PC-9 (cell line): ENCODE measurements at regions of chr17 and their contacts with region 1.

Region 1: GRCh38 chr17:50904521-50905459 is 38.6 kb upstream of the TOB1 start:
- DNase-seq: peak; percentile 83 to 95
- H3K4me3 ChIP-seq: peak overlapping the region; percentile 42; the same call in 1 of the 2 replicates
- H3K27ac ChIP-seq: peak overlapping the region; percentile 87
- H3K4me1 ChIP-seq: peaks cover 60% of the 10 kb centered on the region
- H3K27me3 ChIP-seq: no peaks in the 10 kb centered on the region
- CTCF ChIP-seq: peak; percentile 48

Region 2: GRCh38 chr17:50949989-50950881 is 45.4 kb after region 1 on chr17:
- CTCF ChIA-PET with region 1: no interaction called
- POLR2A ChIA-PET with region 1: interaction called, 3 read pairs
- intact Hi-C with region 1: loop called (anchors 5 kb)
- DNase-seq: peak; percentile 91 to 96
- H3K4me3 ChIP-seq: peak overlapping the region; percentile 34; the same call in 1 of the 2 replicates
- H3K27ac ChIP-seq: peak overlapping the region; percentile 73
- H3K4me1 ChIP-seq: peaks cover 59% of the 10 kb centered on the region
- H3K27me3 ChIP-seq: no peaks in the 10 kb centered on the region
- CTCF ChIP-seq: peak; percentile 90